Calu3 (cell line): ENCODE measurements at regions of chr5 and their contacts with region 1.

Region 1: GRCh38 chr5:119743927-119744326 is 114.6 kb downstream of the FAM170A start:
- DNase-seq: peak; percentile 51
- H3K4me3 Mint-ChIP-seq: no peak overlapping the region
- H3K27ac Mint-ChIP-seq: no peak overlapping the region
- H3K4me1 Mint-ChIP-seq: no peaks in the 10 kb centered on the region
- H3K27me3 Mint-ChIP-seq: no peaks in the 10 kb centered on the region
- CTCF ChIP-seq: peak; percentile 66

Region 2: GRCh38 chr5:118987988-118988865 is 755.7 kb before region 1 on chr5 and contains the start of gene DTWD2:
- CTCF ChIA-PET with region 1: no interaction called
- intact Hi-C with region 1: loop called (anchors 2 kb)
- DNase-seq: peak; percentile 99
- H3K4me3 Mint-ChIP-seq: peak within 1 kb of the TSS; percentile 82
- H3K27ac Mint-ChIP-seq: peak within 1 kb of the TSS; percentile 91
- H3K4me1 Mint-ChIP-seq: peaks cover 54% of the 10 kb centered on the region
- H3K27me3 Mint-ChIP-seq: no peaks in the 10 kb centered on the region
- CTCF ChIP-seq: peak; percentile 98
- total RNA-seq, gene DTWD2: 12.3 and 12.6 TPM in 2 replicates

Region 3: DNA sequence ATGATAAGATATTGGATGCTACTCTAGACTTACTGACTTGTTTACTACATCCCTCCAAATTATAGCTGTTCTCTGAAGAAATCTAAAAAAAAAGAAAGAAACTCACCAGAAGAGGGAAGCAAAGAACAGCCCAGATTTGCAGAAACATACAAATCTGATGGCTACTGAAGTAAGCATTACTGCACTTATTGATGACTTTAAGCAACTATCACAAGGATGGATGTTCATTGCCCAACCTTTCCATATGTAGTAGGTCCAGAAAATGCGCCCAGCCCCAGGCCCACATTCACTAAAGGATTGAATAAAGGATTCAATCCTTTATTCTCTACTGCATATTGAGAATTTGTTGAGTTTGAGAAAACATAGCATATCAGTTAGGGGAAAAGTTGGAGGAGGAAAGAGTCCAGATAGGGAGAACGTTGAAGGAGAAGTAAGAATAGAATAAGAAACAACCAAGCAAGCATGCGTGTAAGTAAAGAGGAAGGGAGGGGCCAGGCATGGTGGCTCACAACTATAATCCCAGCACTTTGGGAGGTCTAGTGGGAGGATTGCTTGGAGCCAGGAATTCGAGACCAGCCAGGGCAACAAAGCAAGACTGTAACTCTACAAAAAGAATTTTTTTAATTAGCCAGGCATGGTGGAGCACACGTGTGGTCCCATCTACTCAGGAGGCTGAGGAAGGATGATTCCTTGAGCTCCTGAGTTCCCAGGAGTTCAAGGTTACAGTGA is 721.7 kb before region 1 on chr5:
- CTCF ChIA-PET with region 1: no interaction called
- intact Hi-C with region 1: loop called (anchors 5 kb)
- DNase-seq: no peak
- H3K4me3 Mint-ChIP-seq: no peak overlapping the region
- H3K27ac Mint-ChIP-seq: no peak overlapping the region
- H3K4me1 Mint-ChIP-seq: peaks cover 9% of the 10 kb centered on the region
- H3K27me3 Mint-ChIP-seq: no peaks in the 10 kb centered on the region
- CTCF ChIP-seq: peak; percentile 34

Region 4: DNA sequence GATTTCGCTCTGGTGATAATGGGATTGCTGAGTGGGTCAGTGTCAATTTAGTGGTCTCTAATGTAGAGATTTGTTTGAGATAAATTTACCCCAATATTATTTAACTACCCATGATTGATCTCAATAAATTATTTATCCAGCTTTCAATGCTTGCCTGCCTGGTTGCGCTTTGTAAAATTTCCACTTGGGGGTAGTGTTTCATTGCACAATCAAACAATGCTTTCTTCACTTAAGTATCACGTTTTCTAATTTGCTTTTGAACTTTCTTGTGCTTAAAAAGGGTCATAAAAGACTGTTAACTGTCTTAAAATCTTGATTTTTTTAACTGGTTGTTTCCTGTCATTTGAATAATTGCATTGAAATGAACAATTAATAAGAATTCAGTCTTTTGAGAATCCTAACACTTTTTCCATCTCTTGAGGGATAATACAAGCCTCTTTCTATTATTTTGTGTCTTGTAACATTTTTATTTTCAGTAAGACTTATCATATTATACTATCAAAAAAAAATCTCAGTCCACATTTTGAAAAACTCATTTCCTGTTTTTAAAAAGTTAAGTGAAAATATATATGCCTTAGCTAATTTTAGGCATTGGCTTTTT is 273.0 kb before region 1 on chr5:
- CTCF ChIA-PET with region 1: interaction called, 3 read pairs
- intact Hi-C with region 1: loop called (anchors 2 kb)
- DNase-seq: peak; percentile 41
- H3K4me3 Mint-ChIP-seq: no peak overlapping the region
- H3K27ac Mint-ChIP-seq: no peak overlapping the region
- H3K4me1 Mint-ChIP-seq: no peaks in the 10 kb centered on the region
- H3K27me3 Mint-ChIP-seq: no peaks in the 10 kb centered on the region
- CTCF ChIP-seq: peak; percentile 77

Region 5: DNA sequence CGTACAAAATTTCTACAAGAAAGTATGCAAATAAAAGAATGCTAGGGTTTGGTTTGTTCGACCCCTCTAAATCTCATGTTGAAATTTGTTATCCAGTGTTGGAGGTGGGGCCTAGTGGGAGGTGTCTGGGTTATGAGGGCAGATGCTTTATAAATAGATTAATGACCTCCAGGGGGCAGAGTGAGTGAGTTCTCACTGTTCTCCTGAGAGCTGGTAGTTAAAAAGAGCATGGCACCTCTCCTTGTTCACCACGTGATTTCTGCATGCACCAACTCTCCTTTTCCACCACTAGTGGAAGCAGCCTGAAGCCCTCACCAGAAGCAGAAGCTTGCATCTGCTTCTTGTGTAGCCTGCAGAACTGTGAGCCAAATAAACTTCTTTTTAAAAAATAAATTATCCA is 165.0 kb before region 1 on chr5:
- CTCF ChIA-PET with region 1: no interaction called
- intact Hi-C with region 1: loop called (anchors 2 kb)
- DNase-seq: peak; percentile 50
- H3K4me3 Mint-ChIP-seq: no peak overlapping the region
- H3K27ac Mint-ChIP-seq: no peak overlapping the region
- H3K4me1 Mint-ChIP-seq: no peaks in the 10 kb centered on the region
- H3K27me3 Mint-ChIP-seq: no peaks in the 10 kb centered on the region
- CTCF ChIP-seq: peak; percentile 58

Region 6: GRCh38 chr5:119721775-119722174 is 22.2 kb before region 1 on chr5:
- CTCF ChIA-PET with region 1: no interaction called
- intact Hi-C with region 1: no loop called
- DNase-seq: no peak
- H3K4me3 Mint-ChIP-seq: no peak overlapping the region
- H3K27ac Mint-ChIP-seq: no peak overlapping the region
- H3K4me1 Mint-ChIP-seq: no peaks in the 10 kb centered on the region
- H3K27me3 Mint-ChIP-seq: no peaks in the 10 kb centered on the region
- CTCF ChIP-seq: no peak